ENCODE measurements at regions of chr12 and their contacts with region 1.

Region 1: DNA sequence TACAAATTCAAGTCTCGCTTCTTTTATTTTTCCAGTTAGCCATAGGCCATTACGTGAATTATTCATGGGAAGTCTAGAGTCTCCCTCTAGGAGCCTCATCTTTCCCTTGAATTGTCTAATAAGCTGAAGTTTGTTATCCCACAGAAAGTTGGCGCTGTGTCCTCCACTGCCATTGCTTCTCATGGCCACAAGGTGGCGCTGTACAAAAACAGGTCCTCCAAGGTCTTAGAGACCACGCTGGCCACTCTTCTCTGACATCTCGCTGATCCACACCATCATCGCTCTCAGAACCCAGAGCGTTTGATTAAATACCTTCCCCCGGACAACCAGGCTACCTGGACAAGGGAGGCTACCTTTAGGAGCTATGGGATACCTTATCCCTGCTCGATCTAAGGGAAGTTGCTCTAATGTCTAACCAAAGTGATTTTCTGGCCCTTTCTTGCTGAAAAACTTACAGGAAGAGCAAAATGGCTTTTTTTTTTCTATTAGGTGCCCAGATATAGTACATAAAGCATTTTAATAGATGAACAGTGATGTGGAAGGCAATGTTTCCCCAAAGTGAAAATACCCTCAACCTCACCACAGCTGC is 110.0 kb downstream of the CCDC60 start:
- H3K4me3 ChIP-seq: no peak overlapping the region
- H3K27ac ChIP-seq: no peak overlapping the region
- H3K4me1 ChIP-seq: no peaks in the 10 kb centered on the region
- CTCF ChIP-seq: peak; percentile 68

Region 2: DNA sequence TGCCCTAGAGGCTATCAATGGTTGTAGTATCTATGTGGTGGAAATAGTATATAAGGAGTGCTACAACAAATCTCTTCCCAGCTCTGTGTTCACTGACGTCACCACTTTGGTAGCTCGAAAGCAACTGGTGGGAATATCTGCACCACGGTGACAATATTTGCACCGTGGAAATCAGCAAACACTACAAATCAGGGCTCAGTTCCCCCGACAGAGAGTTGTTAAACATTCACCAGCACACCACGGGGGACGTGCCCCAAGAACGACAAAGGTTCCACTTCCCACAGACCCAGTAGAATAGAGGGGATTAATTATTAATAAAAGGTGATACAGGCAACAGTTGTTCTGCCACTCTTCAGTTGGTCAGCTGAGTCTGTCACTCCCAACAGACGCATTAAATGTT is 11.6 kb before region 1 on chr12:
- CTCF ChIA-PET with region 1: interaction called, 40 read pairs
- POLR2A ChIA-PET with region 1: no interaction called
- H3K4me3 ChIP-seq: no peak overlapping the region
- H3K27ac ChIP-seq: no peak overlapping the region
- H3K4me1 ChIP-seq: no peaks in the 10 kb centered on the region
- CTCF ChIP-seq: no peak

Region 3: DNA sequence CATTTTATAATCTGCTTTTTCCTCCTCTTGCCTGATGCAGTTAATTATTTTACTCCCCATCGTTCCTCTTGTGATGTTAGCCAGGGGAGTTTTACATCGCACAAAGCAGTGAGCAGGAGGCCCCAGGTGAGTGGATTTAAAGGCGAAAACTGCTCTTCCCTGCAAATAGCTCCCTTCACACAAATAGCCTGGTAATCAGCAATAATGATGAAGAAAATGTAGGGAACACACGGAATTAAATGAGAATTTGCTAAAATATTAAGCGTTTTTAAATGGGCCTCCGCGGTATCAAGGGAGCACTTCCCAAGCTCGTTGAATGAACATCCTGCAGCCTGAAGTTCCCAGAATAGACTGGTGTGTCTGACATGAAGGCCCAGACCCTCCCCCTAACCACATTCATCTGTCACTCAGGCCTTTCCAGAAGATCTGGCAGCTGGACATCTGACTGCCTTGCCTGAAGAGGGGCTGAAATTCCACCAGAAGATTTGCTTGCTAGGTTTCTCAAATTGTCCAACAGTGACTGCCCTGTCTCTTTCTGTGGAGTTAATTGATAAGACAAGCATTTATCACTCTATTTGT is 17.2 kb after region 1 on chr12:
- CTCF ChIA-PET with region 1: interaction called, 16 read pairs
- POLR2A ChIA-PET with region 1: no interaction called
- H3K4me3 ChIP-seq: no peak overlapping the region
- H3K27ac ChIP-seq: no peak overlapping the region
- H3K4me1 ChIP-seq: no peaks in the 10 kb centered on the region
- CTCF ChIP-seq: no peak

Region 4: GRCh38 chr12:119468296-119468695 is 23.7 kb after region 1 on chr12:
- CTCF ChIA-PET with region 1: interaction called, 11 read pairs
- POLR2A ChIA-PET with region 1: no interaction called
- H3K4me3 ChIP-seq: no peak overlapping the region
- H3K27ac ChIP-seq: no peak overlapping the region
- H3K4me1 ChIP-seq: no peaks in the 10 kb centered on the region
- CTCF ChIP-seq: no peak

Region 5: GRCh38 chr12:119544765-119545625 is 100.4 kb after region 1 on chr12:
- CTCF ChIA-PET with region 1: interaction called, 61 read pairs
- POLR2A ChIA-PET with region 1: no interaction called
- H3K4me3 ChIP-seq: no peak overlapping the region
- H3K27ac ChIP-seq: no peak overlapping the region
- H3K4me1 ChIP-seq: no peaks in the 10 kb centered on the region
- CTCF ChIP-seq: peak; percentile 68

Measured in HEK293 (cell line).